Aorta (tissue), 5 donors: ENCODE measurements at regions of chr2 and their contacts with region 1.

Region 1: DNA sequence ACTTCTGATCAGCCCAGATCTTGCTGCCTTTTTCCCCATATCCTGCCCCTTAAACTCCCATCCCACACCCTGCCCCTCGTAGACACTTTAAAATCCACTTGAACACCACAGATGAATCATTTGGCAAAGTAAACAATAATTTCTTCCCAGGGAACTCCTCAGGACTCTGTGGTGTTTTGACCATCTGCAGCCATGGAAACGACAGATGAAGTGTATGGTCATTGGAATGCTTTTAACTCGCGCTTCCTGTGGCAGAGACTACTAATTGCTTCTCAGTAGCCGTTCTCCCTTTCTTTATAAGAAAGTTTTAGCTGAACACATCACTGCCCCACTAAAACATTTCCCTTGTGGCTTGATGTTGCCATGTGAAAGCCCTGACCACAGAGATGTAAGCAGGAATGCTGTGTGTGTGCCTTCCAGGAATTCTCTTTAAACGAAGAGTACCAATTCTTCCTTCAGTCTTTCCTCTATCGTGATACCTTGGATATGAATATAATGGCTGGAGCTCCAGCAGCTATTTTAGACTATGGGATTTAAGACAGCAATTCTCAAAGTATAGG is 92.7 kb upstream of the PARD3B start:
- DNase-seq: peak in 1 of 2 donors; percentile 53
- ATAC-seq: peak; percentile 78
- H3K4me3 ChIP-seq: no peak overlapping the region
- H3K27ac ChIP-seq: peak overlapping the region; percentile 8 to 53
- H3K4me1 ChIP-seq: peaks cover 0 to 2% of the 10 kb centered on the region in 2 donors
- H3K27me3 ChIP-seq: no peaks in the 10 kb centered on the region

Region 2: DNA sequence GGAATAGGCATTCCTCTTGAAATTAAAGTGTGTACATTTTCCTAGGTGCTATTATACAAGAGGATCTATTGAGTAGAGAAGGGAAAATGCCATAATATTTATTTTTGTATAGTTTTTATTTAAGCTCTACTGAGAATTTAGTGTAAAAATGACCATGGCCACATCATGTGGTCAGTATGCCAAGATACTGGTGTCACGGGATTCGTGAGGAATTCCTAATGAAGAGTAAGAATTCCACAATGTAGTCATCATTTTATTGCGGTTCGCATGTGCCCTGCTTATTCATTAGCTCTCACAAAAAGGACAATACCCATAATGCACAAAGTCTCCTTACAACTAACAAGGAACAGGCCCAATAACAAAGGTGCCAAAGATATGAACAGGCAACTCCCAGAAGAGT is 53.4 kb after region 1 on chr2:
- intact Hi-C with region 1: no loop called
- DNase-seq: no peak
- ATAC-seq: no peak
- H3K4me3 ChIP-seq: no peak overlapping the region
- H3K27ac ChIP-seq: no peak overlapping the region
- H3K4me1 ChIP-seq: no peaks in the 10 kb centered on the region
- H3K27me3 ChIP-seq: no peaks in the 10 kb centered on the region

Region 3: DNA sequence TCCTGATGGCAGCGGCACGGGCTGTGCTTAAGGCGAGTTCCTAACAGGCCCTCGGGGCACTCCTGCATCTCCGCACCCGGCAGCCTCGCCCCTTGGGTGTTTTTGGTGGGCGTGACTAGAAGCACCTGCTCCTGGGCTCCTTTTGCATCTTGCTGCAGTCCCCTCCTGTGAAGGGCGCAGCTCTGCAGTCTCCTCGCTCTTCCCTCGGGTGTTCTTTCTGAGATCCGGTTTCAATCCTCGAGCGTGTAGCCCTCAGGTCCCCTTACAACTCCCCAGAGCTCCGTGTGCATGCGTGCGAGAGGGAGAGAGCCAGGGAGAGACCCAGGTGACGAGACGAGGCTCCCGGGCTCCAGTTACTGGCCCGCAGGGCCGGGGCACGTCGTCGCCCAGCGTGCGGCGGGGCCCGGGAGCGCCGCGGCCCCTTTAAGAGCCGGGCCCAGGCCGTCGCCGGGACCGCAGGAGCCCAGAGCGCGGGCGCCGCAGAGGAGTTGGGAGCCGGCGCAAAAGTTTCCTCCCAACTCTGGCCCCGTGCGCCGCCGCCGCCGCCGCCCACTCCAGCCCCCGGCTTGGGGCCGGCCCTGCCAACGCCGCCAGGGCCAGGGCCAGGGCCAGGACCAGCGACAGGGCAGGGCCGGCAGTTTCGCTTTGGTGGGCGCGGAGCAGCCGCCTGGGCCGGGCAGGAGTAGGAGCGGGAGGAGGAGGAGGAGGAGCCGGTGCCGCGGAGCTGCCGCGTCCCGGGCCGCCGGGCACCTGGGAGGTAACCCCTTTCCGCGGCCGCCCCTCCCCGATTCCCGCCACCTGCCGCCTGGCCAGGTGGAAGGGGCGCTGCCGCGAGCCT is 92.7 kb after region 1 on chr2 and contains the start of gene PARD3B:
- intact Hi-C with region 1: loop called in 1 of 2 experiments (anchors 10 kb)
- DNase-seq: peak; percentile 72 to 85
- ATAC-seq: peak; percentile 89
- H3K4me3 ChIP-seq: peak within 1 kb of the TSS; percentile 81
- H3K27ac ChIP-seq: peak within 1 kb of the TSS in 1 of 2 donors; percentile 38
- H3K4me1 ChIP-seq: no peaks in the 10 kb centered on the region
- H3K27me3 ChIP-seq: no peaks in the 10 kb centered on the region
- total RNA-seq, gene PARD3B: 36.7 to 50.9 TPM